Posterior vena cava (tissue), 2 donors: ENCODE measurements at regions of chr11 and their contacts with region 1.

Region 1: DNA sequence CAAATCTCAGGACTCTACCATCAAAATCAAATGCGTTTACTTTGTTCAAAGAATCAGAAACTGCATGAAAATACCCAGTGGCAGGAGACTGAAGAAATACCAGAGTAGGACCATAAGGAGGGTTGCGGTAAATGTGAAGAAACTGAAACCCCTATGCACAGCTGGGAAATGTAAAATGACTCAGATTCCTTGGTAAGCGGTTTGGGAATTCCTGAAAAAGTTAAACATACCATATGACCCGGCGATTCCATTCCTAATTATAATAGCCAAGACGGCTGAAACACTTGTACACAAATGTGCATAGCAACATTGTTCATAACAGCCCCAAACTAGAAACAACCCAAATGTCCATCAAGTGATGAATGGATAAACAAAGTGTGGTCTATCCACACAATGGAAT is 114.1 kb upstream of the GRAMD1B start:
- DNase-seq: no peak

Region 2: DNA sequence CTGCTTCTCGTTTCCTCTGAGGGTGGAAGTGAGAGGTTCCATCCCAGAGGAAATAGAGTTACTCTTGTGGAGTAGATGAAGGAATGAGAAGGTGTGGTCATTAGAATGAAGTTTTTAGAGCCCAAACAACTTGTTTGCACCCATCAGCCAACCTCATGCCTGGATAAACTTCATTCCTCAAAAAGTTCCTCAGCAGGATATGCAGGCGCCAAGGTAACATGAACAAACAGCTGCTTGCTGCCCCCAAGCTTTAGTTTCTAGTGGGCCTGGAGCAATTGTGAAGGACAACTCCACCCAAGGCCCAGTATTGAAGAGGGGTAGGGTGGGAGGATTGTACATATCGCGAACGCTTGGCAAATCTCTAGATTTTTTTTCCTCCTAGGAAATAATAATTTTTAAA is 43.4 kb after region 1 on chr11:
- intact Hi-C with region 1: loop called in 1 of 2 experiments (anchors 1 kb)
- DNase-seq: no peak